ENCODE measurements at regions of chr20 and their contacts with region 1.

Region 1: GRCh38 chr20:63864847-63865640 is at the start of gene TPD52L2:
- DNase-seq: peak; percentile 99
- H3K4me3 ChIP-seq: peak within 1 kb of the TSS; percentile 62 to 77 (median 68)
- H3K27ac ChIP-seq: peak within 1 kb of the TSS; percentile 69
- H3K4me1 ChIP-seq: peaks cover 5% of the 10 kb centered on the region
- H3K27me3 ChIP-seq: no peaks in the 10 kb centered on the region
- CTCF ChIP-seq: no peak
- POLR2A ChIP-seq: peak; percentile 90
- total RNA-seq, gene TPD52L2: 114 and 123 TPM in 2 replicates

Region 2: GRCh38 chr20:63657937-63658748 is 206.9 kb before region 1 on chr20 and contains the start of gene RTEL1:
- CTCF ChIA-PET with region 1: no interaction called
- POLR2A ChIA-PET with region 1: no interaction called
- dilution Hi-C with region 1: no loop called
- intact Hi-C with region 1: loop called (anchors 1 kb)
- DNase-seq: peak; percentile 93
- H3K4me3 ChIP-seq: peak within 1 kb of the TSS; percentile 60 to 83 (median 62)
- H3K27ac ChIP-seq: peak within 1 kb of the TSS; percentile 50
- H3K4me1 ChIP-seq: peaks cover 10% of the 10 kb centered on the region
- H3K27me3 ChIP-seq: no peaks in the 10 kb centered on the region
- CTCF ChIP-seq: no peak
- POLR2A ChIP-seq: peak; percentile 54
- total RNA-seq, gene RTEL1: 38.6 and 44.9 TPM in 2 replicates

Region 3: DNA sequence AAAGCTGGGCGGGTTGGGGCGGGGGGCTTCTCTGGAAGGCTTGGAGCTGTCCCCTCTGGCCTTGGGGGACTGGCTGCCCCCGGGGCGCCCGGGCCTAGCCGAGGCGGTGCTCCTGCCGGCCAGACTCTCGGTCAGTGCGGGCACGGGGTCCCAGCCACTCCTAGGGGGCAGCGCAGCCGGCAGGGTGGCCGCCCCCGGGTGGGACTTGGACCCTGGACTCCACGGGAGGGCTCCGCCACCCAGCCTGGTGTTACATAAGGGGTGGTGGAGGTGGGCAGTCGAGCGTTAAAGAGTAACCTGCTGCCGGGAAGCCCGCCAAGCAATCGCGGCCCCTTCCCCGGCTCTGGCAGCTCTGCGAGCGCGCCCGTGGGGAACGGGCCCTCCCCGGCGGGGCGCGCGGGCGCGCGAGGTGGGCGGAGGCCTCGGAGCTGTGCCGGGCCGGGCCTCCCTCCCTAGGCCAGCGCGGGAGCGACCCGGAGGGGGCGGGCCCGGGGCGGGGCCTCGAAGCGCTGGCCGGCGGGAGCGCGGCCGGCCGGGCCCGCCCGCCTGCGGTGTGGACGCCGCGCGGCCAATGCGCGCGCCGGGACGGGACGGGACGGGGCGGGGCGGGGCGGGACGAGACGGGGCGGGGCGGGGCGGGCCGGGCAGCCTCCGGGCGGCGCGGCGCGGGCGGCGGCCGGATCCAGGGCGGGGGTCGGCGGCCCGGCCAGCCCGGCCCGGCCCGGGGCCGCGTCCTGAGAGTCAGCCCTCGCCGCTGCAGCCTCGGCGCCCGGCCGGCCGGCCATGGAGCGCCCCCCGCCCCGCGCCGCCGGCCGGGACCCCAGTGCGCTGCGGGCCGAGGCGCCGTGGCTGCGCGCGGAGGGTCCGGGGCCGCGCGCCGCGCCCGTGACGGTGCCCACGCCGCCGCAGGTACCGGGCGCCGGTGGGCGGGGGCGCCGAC is 125.6 kb before region 1 on chr20 and contains the start of gene SLC2A4RG:
- CTCF ChIA-PET with region 1: interaction called, 10 read pairs
- POLR2A ChIA-PET with region 1: no interaction called
- dilution Hi-C with region 1: no loop called
- intact Hi-C with region 1: no loop called
- DNase-seq: peak; percentile 40
- H3K4me3 ChIP-seq: peak within 1 kb of the TSS; percentile 41 to 72 (median 52)
- H3K27ac ChIP-seq: no peak within 1 kb of the TSS
- H3K4me1 ChIP-seq: peaks cover 9% of the 10 kb centered on the region
- H3K27me3 ChIP-seq: no peaks in the 10 kb centered on the region
- CTCF ChIP-seq: no peak
- POLR2A ChIP-seq: no peak
- total RNA-seq, gene SLC2A4RG: 69.3 and 69.4 TPM in 2 replicates

Region 4: DNA sequence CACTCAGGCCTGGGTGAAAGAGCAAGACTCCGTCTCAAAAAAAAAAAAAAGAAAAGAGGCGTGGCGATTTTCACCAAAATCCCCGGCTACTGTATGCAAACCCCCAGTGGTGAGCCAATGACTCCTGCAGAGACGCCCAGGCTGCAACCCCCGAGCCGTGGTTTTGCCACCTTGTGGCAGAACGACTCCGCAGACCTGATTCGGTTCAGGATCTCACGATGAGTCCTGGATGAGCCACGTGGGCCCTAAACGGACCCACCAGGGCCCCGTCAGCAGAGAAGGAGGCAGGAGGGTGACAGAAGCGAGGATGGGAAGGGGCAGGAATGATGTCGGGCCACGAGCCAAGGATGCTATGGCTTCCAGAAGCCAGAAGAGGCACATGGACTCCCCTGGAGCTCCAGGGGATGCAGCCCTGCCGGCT is 83.0 kb before region 1 on chr20:
- CTCF ChIA-PET with region 1: interaction called, 24 read pairs
- POLR2A ChIA-PET with region 1: no interaction called
- dilution Hi-C with region 1: no loop called
- intact Hi-C with region 1: loop called (anchors 1 kb)
- DNase-seq: no peak
- H3K4me3 ChIP-seq: no peak overlapping the region
- H3K27ac ChIP-seq: no peak overlapping the region
- H3K4me1 ChIP-seq: no peaks in the 10 kb centered on the region
- H3K27me3 ChIP-seq: no peaks in the 10 kb centered on the region
- CTCF ChIP-seq: no peak
- POLR2A ChIP-seq: no peak

Region 5: GRCh38 chr20:63795178-63795830 is 69.7 kb before region 1 on chr20:
- CTCF ChIA-PET with region 1: no interaction called
- POLR2A ChIA-PET with region 1: no interaction called
- dilution Hi-C with region 1: no loop called
- intact Hi-C with region 1: no loop called
- DNase-seq: no peak
- H3K4me3 ChIP-seq: no peak overlapping the region
- H3K27ac ChIP-seq: no peak overlapping the region
- H3K4me1 ChIP-seq: no peaks in the 10 kb centered on the region
- H3K27me3 ChIP-seq: no peaks in the 10 kb centered on the region
- CTCF ChIP-seq: no peak
- POLR2A ChIP-seq: no peak

Region 6: DNA sequence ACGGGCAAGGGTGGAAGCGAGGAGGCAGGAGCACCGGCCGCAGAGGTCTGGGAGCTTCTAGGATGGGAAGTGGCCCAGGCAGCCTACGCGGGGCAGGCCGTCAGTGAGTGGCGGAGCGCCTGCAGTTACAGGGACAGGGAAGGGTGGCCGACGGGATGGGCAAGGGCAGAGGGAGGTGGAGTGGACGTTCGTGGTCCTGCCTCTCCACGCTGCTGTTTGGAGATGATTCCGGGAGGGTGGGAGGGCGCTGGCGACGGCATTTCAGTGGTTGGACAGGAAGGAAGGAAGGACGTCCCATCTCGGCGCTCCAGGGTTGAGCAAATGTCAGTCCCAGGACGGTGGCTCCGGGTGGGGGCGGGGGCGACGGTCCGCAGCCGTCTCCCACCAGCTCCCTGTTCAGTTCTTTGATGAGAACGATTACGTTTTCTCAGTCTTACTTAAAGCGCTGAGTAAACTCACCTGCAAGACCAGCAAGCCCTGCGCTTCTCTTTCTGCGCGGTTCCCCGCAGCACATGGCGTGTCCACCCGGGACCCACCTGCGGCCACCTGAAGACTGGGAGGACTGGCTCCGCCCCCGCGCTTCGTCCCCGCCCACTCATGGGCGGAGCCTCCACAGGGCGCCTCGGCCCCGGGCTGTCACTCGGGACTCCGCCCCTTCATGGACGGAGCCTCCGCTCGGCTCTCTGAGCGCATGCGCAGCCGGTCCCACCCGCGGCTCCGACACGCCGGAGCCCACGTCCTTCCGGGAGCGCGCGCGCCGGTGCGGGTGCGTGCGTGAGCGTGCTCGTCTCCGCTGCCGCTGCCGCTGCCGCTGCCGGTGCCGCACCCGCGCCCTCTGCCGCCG is 29.5 kb after region 1 on chr20 and contains the start of gene DNAJC5:
- CTCF ChIA-PET with region 1: interaction called, 6 read pairs
- POLR2A ChIA-PET with region 1: no interaction called
- dilution Hi-C with region 1: no loop called
- intact Hi-C with region 1: loop called (anchors 1 kb)
- DNase-seq: peak; percentile 91
- H3K4me3 ChIP-seq: peak within 1 kb of the TSS; percentile 67 to 98 (median 86)
- H3K27ac ChIP-seq: peak within 1 kb of the TSS; percentile 66
- H3K4me1 ChIP-seq: peaks cover 14% of the 10 kb centered on the region
- H3K27me3 ChIP-seq: no peaks in the 10 kb centered on the region
- CTCF ChIP-seq: no peak
- POLR2A ChIP-seq: no peak
- total RNA-seq, gene DNAJC5: 58.7 and 60.3 TPM in 2 replicates